AG04449 (cell line): ENCODE measurements at regions of chr17 and their contacts with region 1.

Region 1: DNA sequence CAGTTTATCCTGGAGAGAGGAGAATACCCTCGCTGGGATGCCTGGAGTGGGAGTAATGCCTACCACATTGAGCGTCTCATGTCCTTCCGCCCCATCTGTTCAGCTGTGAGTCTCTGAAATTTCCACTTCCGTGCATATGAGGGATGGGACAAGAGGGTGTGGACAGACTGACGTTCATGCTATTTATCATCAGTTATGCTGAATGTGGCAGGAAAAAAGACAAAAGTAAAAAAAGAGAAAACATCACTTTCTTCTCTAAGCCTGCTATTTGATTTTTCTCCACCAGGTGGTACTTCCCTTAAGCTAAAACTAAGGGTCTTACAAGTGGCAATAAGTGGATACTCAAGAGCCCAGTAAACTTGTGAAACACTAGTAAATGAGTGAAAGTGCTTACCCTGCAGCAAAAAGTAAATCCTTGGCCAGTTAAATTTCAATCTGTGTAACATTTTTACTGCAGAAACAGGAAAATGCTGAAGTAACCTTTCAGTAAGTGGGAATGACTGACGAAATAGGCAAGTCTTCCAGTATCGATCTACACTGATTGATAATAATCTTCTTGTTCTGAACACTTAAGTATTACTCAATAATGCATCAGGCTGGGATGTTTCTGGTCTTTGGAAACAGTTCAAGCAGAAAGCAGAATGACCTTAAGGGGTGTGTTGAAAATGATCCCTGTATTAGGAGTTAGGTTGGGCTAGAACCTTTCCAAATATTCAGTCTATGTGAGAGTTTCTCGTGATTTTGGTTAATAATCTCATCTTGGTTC is 5.6 kb downstream of the CRYBA1 start:
- DNase-seq: no peak
- H3K4me3 ChIP-seq: no peak overlapping the region
- CTCF ChIP-seq: no peak

Region 2: DNA sequence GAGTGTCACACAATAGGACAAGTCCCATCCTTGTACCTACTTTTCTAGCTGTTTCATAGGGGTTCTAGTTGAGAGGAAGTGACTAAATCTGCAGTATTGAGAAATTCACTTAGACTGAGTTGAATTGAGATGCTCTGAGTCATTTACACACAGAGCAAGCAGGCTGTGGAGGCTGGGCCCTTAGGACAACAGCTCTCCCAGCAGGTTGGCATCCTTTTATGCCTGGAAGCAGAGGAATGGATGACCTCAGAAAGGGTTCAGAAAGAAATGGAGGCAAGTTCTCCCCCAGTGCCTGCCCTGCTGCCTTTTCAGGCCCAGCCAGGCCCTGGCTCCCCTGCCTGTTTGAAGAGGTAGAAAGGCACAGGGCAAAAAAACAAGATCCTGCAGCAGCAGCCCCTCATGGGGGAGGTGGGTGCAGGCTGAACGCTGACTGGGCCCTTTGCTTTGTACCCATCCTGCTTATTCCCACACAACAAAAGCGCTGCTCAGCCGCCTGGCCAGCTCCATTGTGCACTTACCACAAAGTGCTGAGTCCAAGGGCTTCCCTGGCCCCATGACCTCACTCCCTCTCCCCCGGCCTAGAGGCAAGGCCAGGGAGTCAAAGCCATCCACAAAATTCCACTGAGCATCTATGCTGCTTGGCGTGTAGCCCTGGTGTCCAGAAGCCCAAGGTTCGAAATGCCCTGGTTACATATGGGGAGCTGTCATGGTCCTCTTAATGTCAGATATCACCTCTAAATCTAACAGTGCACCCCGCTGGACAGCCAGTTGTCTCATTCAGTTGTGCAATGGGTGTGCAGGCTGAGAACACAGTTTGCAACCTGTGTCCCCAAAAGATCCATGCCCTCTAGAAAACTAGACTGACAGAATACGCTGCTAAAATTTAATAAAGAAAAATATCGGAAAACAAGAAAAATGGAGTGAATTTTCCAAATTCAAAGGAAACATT is 11.0 kb before region 1 on chr17:
- CTCF ChIA-PET with region 1: interaction called, 40 read pairs
- POLR2A ChIA-PET with region 1: interaction called, 18 read pairs
- DNase-seq: peak; percentile 89
- H3K4me3 ChIP-seq: no peak overlapping the region
- CTCF ChIP-seq: no peak

Region 3: DNA sequence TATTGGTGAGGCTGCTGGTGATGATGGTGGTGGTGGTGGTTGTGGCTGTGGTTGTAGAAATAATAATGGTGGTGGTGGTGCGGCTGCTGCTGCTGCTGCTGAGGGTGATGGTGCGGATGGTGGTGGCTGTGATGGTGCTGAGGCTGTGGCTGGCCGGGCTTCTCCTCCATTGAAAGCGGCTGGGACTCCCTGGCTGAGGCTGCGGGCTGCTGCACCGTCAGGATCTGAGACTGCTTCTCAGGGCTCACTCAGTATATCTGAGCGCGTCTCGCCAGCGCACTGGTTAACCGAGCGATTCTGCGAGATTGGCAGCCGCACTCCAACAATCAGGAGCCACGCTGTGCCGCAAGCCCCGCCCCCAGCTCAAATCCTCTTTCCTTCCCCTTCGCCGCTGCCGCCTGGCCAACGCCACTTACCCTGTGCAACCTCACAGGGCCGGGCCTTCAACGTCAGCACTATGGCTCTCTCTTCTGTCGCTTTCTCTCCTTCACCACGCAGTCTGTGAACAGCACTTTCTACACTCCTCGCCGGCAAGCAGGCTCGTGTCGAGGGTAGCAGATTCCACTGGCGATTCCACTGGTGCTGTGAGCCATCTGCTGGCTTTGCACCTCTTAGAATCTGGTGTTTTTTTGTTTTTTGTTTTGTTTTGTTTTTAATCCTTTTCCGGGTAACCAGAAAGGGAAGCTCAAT is 41.8 kb after region 1 on chr17 and contains the start of gene NUFIP2:
- CTCF ChIA-PET with region 1: interaction called, 17 read pairs
- POLR2A ChIA-PET with region 1: interaction called, 12 read pairs
- DNase-seq: peak; percentile 83
- H3K4me3 ChIP-seq: peak within 1 kb of the TSS; percentile 99
- CTCF ChIP-seq: no peak